ENCODE measurements at regions of chr11 and their contacts with region 1.

Region 1: DNA sequence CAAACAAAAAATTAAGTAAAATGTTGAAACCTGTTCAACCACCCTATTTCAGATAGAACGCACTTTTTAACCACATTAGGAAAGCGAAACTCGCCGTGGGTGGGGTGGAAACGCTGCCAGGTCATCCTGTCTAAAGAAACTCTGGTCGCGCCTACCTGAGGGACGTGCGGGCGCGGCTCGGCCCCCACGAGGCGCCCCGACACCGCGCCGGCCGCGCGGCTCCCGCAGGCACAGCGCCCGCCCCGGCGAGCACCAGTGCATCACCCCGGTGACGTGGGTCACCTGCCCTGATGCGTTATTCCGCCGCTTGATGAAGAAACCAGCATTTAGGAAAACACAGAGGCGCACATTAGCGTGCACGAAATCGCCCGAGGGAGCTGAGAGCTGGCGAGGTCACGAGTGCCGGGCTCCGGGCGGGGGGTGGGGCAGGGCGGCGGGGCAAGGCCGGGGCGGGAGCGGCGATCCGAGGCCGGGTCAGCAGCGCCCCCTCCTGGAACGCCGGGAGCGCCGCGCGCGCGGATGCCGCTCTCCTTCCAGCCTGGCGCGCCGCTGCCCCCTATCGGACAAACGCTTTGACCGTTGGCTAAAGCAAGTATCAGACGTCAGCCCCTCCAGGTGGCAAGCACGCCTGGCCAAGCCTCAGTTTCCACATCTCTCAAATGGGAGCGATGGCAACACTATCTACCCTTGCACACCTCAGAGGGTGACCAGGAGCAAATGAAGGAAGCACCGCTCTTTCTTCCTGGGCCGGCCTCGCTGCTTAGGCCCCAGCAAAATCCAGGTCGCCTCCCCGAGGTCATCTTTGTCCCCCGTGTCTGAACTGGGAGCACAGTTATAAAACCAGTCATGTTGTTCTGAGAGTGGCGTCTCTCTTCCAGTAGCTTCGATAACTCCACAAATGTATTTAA is 15.7 kb upstream of the SNX32 start:
- DNase-seq: peak; percentile 87 to 94 (median 88)
- H3K4me3 ChIP-seq: peak overlapping the region; percentile 45 to 80 (median 77)
- H3K4me3 Mint-ChIP-seq: peak overlapping the region; percentile 74 to 87
- H3K27ac ChIP-seq: peak overlapping the region; percentile 65 to 84
- H3K27ac Mint-ChIP-seq: peak overlapping the region; percentile 72 to 88 (median 83)
- H3K4me1 ChIP-seq: peaks cover 32 to 39% of the 10 kb centered on the region in 2 donors
- H3K4me1 Mint-ChIP-seq: peaks cover 50% of the 10 kb centered on the region
- H3K27me3 ChIP-seq: no peaks in the 10 kb centered on the region
- H3K27me3 Mint-ChIP-seq: peaks cover 0 to 1% (median 0%) of the 10 kb centered on the region in 3 donors
- CTCF ChIP-seq: peak; percentile 100

Region 2: DNA sequence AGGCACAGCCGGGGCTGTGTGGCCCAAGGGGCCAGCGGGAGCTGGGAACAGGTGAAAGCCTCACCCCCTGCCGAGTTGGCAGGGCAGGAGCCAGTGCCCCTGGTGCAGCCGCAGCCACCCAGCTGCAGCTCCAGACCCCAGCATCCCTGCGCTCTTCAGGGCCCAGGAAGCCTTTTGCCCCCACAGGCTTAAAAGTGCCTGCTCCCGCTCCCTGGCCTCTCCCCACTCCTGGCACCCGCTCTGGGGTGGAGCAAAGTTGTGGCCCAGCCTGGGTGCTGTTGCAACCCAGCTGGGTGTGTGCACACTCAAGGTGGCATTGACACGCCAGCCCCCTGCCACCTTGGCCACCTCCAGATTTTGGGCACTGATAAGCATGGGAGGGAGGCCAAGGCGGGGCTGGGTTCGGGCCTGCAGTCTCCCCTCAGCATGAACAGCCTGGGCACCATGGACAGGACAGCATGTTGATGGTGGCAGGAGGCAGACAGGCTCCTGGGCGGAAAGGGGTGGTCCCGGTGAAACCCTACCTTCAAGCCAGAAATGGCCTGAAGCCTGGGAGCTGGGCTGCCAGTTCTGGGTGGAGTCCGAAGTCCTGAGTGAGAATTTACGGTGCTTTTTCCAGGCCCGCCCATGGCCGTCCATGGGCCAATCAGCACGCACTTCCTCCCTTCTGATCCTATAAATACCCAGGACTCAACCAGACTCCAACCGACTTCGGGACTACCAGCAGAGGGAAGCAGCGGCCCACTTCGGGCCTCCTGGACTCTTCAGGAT is 74.0 kb before region 1 on chr11:
- intact Hi-C with region 1: loop called in 1 of 2 experiments (anchors 1 kb)
- DNase-seq: peak; percentile 53 to 71 (median 65)
- H3K4me3 ChIP-seq: no peak overlapping the region
- H3K4me3 Mint-ChIP-seq: no peak overlapping the region
- H3K27ac ChIP-seq: no peak overlapping the region
- H3K27ac Mint-ChIP-seq: no peak overlapping the region
- H3K4me1 ChIP-seq: peaks cover 0 to 7% of the 10 kb centered on the region in 2 donors
- H3K4me1 Mint-ChIP-seq: peaks cover 6% of the 10 kb centered on the region
- H3K27me3 ChIP-seq: no peaks in the 10 kb centered on the region
- H3K27me3 Mint-ChIP-seq: peaks cover 0 to 3% (median 1%) of the 10 kb centered on the region in 3 donors
- CTCF ChIP-seq: no peak

Region 3: DNA sequence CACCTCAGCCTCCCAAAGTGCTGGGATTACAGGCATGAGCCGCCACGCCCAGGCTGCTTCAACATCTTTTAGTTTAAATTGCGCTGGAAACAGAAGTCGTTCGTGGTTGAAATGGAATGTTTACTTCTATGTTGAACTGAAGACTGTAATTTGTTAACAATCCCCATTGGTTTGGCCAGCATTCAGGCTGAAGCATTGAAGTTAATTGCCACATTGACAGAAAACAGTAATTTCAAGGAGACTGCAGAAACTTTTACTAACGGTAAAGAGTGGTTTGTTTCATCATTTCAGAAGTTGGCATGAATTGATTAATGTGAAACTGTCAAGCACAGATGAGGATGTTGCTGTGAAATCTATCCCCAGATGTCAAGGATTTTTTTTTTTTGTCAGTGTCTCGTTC is 51.6 kb before region 1 on chr11:
- intact Hi-C with region 1: loop called in 1 of 2 experiments (anchors 10 kb)
- DNase-seq: no peak
- H3K4me3 ChIP-seq: no peak overlapping the region
- H3K4me3 Mint-ChIP-seq: no peak overlapping the region
- H3K27ac ChIP-seq: no peak overlapping the region
- H3K27ac Mint-ChIP-seq: peak overlapping the region in 4 of 7 donors; percentile 26 to 80 (median 66)
- H3K4me1 ChIP-seq: peaks cover 41 to 49% of the 10 kb centered on the region in 2 donors
- H3K4me1 Mint-ChIP-seq: peaks cover 52% of the 10 kb centered on the region
- H3K27me3 ChIP-seq: no peaks in the 10 kb centered on the region
- H3K27me3 Mint-ChIP-seq: peaks cover 0 to 2% (median 0%) of the 10 kb centered on the region in 3 donors
- CTCF ChIP-seq: no peak

Region 4: GRCh38 chr11:65779851-65780577 is 38.1 kb before region 1 on chr11:
- intact Hi-C with region 1: loop called (anchors 1 to 5 kb)
- DNase-seq: peak; percentile 81 to 87 (median 86)
- H3K4me3 ChIP-seq: peak overlapping the region; percentile 76 to 99 (median 99)
- H3K4me3 Mint-ChIP-seq: peak overlapping the region; percentile 89 to 94
- H3K27ac ChIP-seq: peak overlapping the region; percentile 98 to 99
- H3K27ac Mint-ChIP-seq: peak overlapping the region; percentile 89 to 99 (median 96)
- H3K4me1 ChIP-seq: peaks cover 52 to 57% of the 10 kb centered on the region in 2 donors
- H3K4me1 Mint-ChIP-seq: peaks cover 41% of the 10 kb centered on the region
- H3K27me3 ChIP-seq: peaks cover under 1 to 32% of the 10 kb centered on the region in 2 donors
- H3K27me3 Mint-ChIP-seq: peaks cover 17 to 31% (median 23%) of the 10 kb centered on the region in 3 donors
- CTCF ChIP-seq: peak; percentile 100

Region 5: GRCh38 chr11:65888163-65888814 is 70.2 kb after region 1 on chr11 and contains the start of gene FIBP:
- intact Hi-C with region 1: no loop called
- DNase-seq: peak; percentile 95 to 97 (median 97)
- H3K4me3 ChIP-seq: peak within 1 kb of the TSS; percentile 63 to 82 (median 69)
- H3K4me3 Mint-ChIP-seq: peak within 1 kb of the TSS; percentile 95 to 99
- H3K27ac ChIP-seq: peak within 1 kb of the TSS; percentile 88 to 95
- H3K27ac Mint-ChIP-seq: peak within 1 kb of the TSS; percentile 98 to 100 (median 99)
- H3K4me1 ChIP-seq: peaks cover 57 to 81% of the 10 kb centered on the region in 2 donors
- H3K4me1 Mint-ChIP-seq: peaks cover 63% of the 10 kb centered on the region
- H3K27me3 ChIP-seq: no peaks in the 10 kb centered on the region
- H3K27me3 Mint-ChIP-seq: peaks cover 0 to 7% (median 0%) of the 10 kb centered on the region in 3 donors
- CTCF ChIP-seq: peak; percentile 95
- polyA plus RNA-seq, gene FIBP: 79.1 to 109 (median 101) TPM

Region 6: GRCh38 chr11:66242095-66242765 is 424.1 kb after region 1 on chr11:
- intact Hi-C with region 1: no loop called
- DNase-seq: no peak
- H3K4me3 ChIP-seq: no peak overlapping the region
- H3K4me3 Mint-ChIP-seq: no peak overlapping the region
- H3K27ac ChIP-seq: no peak overlapping the region
- H3K27ac Mint-ChIP-seq: no peak overlapping the region
- H3K4me1 ChIP-seq: no peaks in the 10 kb centered on the region
- H3K4me1 Mint-ChIP-seq: no peaks in the 10 kb centered on the region
- H3K27me3 ChIP-seq: no peaks in the 10 kb centered on the region
- H3K27me3 Mint-ChIP-seq: peaks cover 0 to 2% (median 1%) of the 10 kb centered on the region in 3 donors
- CTCF ChIP-seq: no peak

Measured in CD14-positive monocyte (primary cell).